WTC11 (cell line): ENCODE measurements at regions of chr20 and their contacts with region 1.

Region 1: DNA sequence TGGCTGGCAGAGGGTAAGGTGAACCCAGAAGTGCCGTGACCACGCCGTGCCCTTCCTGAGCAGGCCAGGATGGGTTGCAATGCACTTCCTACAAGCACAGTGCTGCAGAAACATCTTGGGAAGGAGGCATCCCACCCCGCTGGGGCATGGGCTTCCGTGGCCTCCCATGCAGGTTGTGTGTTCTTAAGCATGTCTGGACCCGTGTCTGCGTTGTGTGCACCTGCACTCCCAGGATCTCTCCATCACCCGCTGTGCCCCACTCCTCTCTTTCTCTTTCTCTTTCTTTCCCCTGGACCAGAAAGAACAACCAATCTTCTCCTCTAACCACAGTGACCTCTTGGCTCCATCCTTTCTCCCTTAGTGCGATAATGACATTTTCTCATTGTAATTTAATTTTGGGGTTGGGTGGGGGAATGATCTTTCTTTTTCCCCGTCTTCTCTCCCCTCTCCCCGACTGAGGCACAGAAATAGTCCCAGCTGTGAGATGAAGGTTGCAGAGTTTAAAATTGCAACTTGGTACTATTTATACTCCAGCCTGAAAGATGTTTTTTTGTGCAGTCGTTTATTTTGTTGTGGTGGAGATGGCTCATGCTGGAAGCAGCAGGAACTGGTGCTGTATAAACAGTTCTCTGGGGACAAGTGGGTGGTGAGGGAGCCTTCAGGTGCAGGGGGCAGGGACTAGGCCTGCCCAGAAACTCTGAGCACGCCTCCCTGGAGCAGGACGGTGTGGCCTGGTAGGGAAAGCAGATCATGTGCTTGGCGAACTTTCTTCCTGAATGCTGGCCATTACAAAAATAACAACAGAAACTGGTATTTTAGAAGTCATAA is 20.5 kb downstream of the BCAS4 start:
- DNase-seq: no peak
- ATAC-seq: 0 out of 2 replicates have a peak, but pooled peaks have one; percentile 10
- H3K4me3 Mint-ChIP-seq: no peak overlapping the region
- H3K27ac Mint-ChIP-seq: peak overlapping the region; percentile 67
- H3K4me1 Mint-ChIP-seq: peaks cover 22% of the 10 kb centered on the region
- H3K27me3 Mint-ChIP-seq: no peaks in the 10 kb centered on the region; the same call in 1 of the 2 replicates
- CTCF ChIP-seq: no peak

Region 2: DNA sequence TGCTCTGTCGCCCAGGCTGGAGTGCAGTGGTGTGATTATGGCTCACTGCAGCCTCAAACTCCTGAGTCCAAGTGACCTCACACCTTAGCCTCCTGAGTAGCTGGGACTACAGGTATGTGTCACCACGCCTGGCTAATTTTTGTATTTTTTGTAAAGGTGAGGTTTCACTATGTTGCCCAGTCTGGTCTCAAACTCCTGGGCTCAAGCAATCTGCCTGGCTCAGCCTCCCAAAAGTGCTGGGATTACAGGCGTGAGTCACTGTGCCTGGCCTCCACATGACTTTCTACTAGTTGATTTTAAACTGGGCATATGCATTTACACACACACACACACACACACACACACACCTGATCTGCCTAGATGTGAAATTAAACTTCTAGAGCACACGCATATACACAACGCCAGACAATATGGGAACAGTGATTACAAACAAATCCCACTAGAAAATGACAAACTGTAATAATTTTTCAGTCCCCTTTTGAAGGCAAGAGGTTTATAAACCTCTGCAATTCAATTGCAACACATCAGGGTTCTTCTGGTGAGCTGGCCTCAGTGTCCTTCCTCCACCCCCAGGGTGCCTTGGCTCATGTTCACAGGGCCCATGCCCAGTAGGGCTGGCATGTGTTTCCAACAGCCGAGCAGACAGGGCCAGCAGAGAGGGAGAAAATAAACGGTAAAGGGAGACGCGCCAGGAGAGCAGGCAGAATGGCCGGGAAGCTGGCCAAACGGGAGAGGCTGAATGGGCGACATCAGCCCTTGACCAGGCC is 52.8 kb before region 1 on chr20:
- CTCF ChIA-PET with region 1: no interaction called
- POLR2A ChIA-PET with region 1: no interaction called
- DNase-seq: no peak
- ATAC-seq: no peak
- H3K4me3 Mint-ChIP-seq: no peak overlapping the region
- H3K27ac Mint-ChIP-seq: no peak overlapping the region; the same call in 1 of the 2 replicates
- H3K4me1 Mint-ChIP-seq: peaks cover 27% of the 10 kb centered on the region
- H3K27me3 Mint-ChIP-seq: no peaks in the 10 kb centered on the region
- CTCF ChIP-seq: no peak

Region 3: GRCh38 chr20:50826121-50826520 is 10.7 kb after region 1 on chr20:
- CTCF ChIA-PET with region 1: no interaction called
- POLR2A ChIA-PET with region 1: no interaction called
- DNase-seq: no peak
- ATAC-seq: no peak
- H3K4me3 Mint-ChIP-seq: no peak overlapping the region
- H3K27ac Mint-ChIP-seq: peak overlapping the region; percentile 7; the same call in 1 of the 2 replicates
- H3K4me1 Mint-ChIP-seq: 0 out of 2 replicates have a peak, but pooled peaks cover 3% of the 10 kb centered on the region
- H3K27me3 Mint-ChIP-seq: no peaks in the 10 kb centered on the region
- CTCF ChIP-seq: no peak

Region 4: GRCh38 chr20:50870561-50871161 is 55.3 kb after region 1 on chr20:
- CTCF ChIA-PET with region 1: interaction called, 22 read pairs
- POLR2A ChIA-PET with region 1: interaction called, 5 read pairs
- DNase-seq: peak; percentile 94
- ATAC-seq: peak; percentile 99
- H3K4me3 Mint-ChIP-seq: peak overlapping the region; percentile 75
- H3K27ac Mint-ChIP-seq: peak overlapping the region; percentile 97
- H3K4me1 Mint-ChIP-seq: peaks cover 36% of the 10 kb centered on the region
- H3K27me3 Mint-ChIP-seq: no peaks in the 10 kb centered on the region
- CTCF ChIP-seq: no peak